Activated naive CD4-positive, alpha-beta T cell treated with anti-CD3 and anti-CD28 coated beads, Interleukin-2, amount 10 ng/mL, durations not matched to agents 7 days and 5 days (primary cell): ENCODE measurements at regions of chr7 and their contacts with region 1.

Region 1: DNA sequence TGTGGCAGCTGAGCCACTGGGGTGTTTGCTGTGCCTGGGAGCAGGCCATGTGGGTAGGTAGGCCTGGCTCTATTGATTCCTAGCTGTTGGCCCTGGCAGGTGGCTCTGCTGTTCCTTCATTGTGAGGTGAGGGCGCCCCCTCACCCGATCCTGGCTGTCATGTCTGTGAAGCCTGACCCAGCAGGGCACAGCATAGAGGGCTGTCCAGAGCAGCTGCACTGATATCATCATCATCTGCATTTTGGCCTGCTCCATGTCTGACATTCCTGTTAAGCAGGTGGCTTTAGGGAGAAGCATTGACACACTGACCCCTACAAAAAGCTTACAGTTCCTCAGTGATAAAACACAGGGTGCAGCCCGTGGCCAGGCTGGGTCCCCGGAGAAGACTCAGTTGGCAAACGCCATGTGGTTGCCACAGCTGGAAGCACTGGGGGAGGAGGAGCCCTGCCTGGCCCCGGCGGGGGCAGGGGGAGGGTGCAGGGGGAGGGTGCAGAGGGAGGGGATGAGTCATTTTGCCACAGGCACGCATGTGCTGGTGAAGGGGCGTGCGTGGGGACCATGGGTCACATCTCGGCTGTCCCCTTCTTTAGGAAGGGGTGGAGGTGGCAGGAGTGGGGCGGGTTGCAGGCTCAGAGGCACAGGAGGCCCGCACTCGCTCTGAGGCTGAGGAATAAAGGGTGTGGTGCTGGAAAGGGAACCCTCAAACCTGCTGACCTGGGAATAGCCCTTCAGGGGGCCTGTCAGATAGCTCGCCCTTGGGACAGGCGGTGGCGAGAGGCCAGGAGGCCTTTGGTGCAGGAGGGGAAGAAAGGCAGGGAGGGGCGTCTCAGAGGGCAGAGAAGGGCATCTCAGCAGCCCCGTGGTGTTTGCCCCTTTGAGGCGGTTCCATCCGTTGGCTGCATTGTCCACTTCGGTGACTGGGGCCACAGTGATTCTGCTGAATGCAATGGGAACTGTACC is 31.6 kb downstream of the IKZF1 start:
- DNase-seq: peak; percentile 84
- H3K4me3 Mint-ChIP-seq: no peak overlapping the region
- H3K27ac Mint-ChIP-seq: no peak overlapping the region
- H3K4me1 Mint-ChIP-seq: no peaks in the 10 kb centered on the region
- H3K27me3 Mint-ChIP-seq: no peaks in the 10 kb centered on the region

Region 2: GRCh38 chr7:50101873-50102272 is 234.2 kb before region 1 on chr7:
- CTCF ChIA-PET with region 1: no interaction called
- DNase-seq: no peak
- H3K4me3 Mint-ChIP-seq: no peak overlapping the region
- H3K27ac Mint-ChIP-seq: no peak overlapping the region
- H3K4me1 Mint-ChIP-seq: no peaks in the 10 kb centered on the region
- H3K27me3 Mint-ChIP-seq: peaks cover 24% of the 10 kb centered on the region

Region 3: GRCh38 chr7:50317221-50317678 is 18.8 kb before region 1 on chr7:
- CTCF ChIA-PET with region 1: interaction called, 15 read pairs
- DNase-seq: peak; percentile 69
- H3K4me3 Mint-ChIP-seq: peak overlapping the region; percentile 99
- H3K27ac Mint-ChIP-seq: peak overlapping the region; percentile 99
- H3K4me1 Mint-ChIP-seq: peaks cover 96% of the 10 kb centered on the region
- H3K27me3 Mint-ChIP-seq: no peaks in the 10 kb centered on the region

Region 4: GRCh38 chr7:50349963-50350944 is 14.2 kb after region 1 on chr7:
- CTCF ChIA-PET with region 1: interaction called, 13 read pairs
- DNase-seq: peak; percentile 81
- H3K4me3 Mint-ChIP-seq: peak overlapping the region; percentile 62
- H3K27ac Mint-ChIP-seq: peak overlapping the region; percentile 96
- H3K4me1 Mint-ChIP-seq: peaks cover 98% of the 10 kb centered on the region
- H3K27me3 Mint-ChIP-seq: no peaks in the 10 kb centered on the region

Region 5: DNA sequence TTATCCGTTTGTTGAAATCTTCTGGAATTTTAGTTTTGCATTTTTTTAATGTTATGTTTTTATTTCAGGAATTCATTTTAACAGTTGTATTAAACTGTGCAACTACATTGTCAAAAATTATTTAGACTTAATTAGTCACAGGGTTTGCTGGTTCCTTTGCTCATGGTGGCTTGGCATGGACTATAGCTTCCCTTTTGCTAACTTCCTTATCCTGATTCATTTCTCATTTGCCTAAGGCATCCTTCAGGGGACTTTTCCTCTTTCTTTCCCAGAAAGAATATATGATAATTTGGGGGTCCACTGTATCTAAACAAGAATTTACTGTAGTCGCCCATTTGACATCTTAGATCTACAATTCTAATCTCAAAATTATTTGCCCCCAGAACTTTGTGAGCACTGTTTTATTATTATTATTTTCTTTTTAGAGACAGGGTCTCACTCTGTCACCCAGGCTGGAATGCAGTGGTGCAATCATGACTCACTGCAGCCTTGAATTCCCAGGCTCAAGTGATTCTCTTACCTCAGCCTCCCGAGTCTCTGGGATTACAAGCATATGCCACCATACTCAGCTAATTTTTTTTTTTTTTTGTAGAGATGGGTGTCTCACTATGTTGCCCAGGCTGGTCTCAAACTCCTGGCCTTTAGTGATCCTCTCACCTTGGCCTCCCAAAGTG is 100.2 kb after region 1 on chr7:
- CTCF ChIA-PET with region 1: no interaction called
- DNase-seq: no peak
- H3K4me3 Mint-ChIP-seq: no peak overlapping the region
- H3K27ac Mint-ChIP-seq: no peak overlapping the region
- H3K4me1 Mint-ChIP-seq: no peaks in the 10 kb centered on the region
- H3K27me3 Mint-ChIP-seq: no peaks in the 10 kb centered on the region